Common myeloid progenitor, CD34-positive (primary cell): ENCODE measurements at regions of chr20 and their contacts with region 1.

Region 1: DNA sequence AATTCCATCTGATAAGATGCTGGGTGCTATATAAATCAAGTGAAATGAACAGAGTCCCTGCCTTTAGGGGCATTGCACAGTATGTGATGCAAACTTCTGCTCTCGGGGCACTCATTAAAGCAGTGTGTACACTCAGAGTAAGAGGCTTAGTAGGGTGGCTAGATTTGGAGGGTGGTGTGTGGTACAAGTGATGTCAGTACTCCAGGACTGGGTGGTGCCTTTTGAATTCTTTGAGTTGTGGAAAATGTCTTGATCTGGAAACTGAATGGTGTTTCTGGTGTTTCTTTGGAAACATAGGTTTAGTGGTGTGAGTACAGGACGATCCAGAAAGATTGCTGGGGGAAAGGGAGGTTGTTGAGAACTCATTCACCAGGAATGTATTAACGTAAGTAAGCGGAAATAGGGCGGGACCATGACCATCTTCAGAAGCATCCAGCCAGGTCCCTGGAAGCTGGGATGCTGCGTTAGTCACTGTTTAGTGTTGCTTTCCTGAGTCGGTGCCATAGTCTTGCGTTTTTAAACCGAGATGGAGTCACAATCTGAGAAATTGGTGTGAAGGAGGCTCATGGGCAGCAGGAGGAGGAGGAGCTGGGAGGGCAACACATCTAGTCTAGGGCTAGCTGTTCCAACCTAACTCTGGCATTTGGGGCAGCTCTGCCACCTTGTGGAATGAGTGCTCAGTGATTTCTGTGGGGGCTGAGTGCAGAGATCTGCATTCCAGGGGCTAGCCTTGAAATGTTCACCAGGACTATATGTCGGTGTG is 70.3 kb downstream of the SCAND1 start:
- DNase-seq: peak; percentile 66 to 83 (median 79)
- H3K4me3 ChIP-seq: no peak overlapping the region
- H3K27ac ChIP-seq: no peak overlapping the region
- H3K4me1 ChIP-seq: peaks cover 0 to 18% (median 8%) of the 10 kb centered on the region in 4 experiments
- H3K27me3 ChIP-seq: no peaks in the 10 kb centered on the region

Region 2: GRCh38 chr20:35750611-35751010 is 133.3 kb before region 1 on chr20:
- CTCF ChIA-PET with region 1: no interaction called
- POLR2A ChIA-PET with region 1: no interaction called
- DNase-seq: no peak
- H3K4me3 ChIP-seq: no peak overlapping the region
- H3K27ac ChIP-seq: no peak overlapping the region
- H3K4me1 ChIP-seq: no peaks in the 10 kb centered on the region
- H3K27me3 ChIP-seq: no peaks in the 10 kb centered on the region

Region 3: GRCh38 chr20:35849706-35850105 is 34.3 kb before region 1 on chr20:
- CTCF ChIA-PET with region 1: interaction called, 15 read pairs
- POLR2A ChIA-PET with region 1: no interaction called
- DNase-seq: peak in 2 of 3 donors; percentile 50 to 67
- H3K4me3 ChIP-seq: peak overlapping the region in 2 of 7 experiments; percentile 26 to 40
- H3K27ac ChIP-seq: peak overlapping the region in 1 of 2 experiments; percentile 35
- H3K4me1 ChIP-seq: peaks cover 0 to 15% (median 12%) of the 10 kb centered on the region in 4 experiments
- H3K27me3 ChIP-seq: no peaks in the 10 kb centered on the region